ENCODE measurements at regions of chr22 and their contacts with region 1.

Region 1: DNA sequence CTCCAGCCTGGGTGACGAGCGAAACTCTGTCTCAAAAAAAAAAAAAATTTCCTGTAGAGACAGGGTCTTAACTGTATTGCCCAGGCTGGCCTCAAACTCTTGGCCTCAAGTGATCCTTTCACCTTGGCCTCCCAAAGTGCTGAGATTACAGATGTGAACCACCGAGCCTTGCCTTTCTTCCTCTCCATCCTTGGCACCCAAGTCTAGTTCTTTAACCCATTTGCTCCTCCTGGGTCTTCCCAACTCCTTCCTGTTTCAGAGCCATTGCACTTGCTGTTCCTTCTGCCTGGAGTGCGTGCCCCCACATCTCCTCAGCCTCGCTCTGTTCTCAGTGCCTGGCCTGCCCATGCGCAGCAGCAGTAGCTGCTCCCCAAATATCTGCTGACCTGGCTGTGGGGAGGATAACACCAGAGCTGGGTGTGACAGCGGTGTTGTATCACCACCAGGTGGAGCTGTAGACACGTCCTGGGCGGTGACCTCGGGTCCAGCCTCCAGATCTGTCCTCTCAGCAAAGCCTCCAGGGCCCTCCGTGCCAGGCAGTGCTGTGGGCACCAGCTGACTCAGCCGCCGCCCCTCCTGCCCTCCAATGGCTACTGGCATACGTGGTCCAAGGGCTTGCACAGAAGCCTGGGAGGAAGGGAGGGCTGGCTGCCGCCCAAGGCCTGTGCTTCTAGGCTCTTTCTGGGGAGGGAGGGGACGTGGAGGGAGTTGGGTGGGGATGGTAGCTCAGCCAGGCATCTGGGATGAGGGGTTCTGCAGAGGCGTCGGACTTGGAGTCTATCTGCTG is 22.0 kb downstream of the TEF start:
- DNase-seq: peak; percentile 85 to 87 (median 86)
- ATAC-seq: peak; percentile 95
- H3K4me3 ChIP-seq: no peak overlapping the region
- H3K4me1 ChIP-seq: peaks cover 20% of the 10 kb centered on the region
- CTCF ChIP-seq: peak; percentile 88

Region 2: DNA sequence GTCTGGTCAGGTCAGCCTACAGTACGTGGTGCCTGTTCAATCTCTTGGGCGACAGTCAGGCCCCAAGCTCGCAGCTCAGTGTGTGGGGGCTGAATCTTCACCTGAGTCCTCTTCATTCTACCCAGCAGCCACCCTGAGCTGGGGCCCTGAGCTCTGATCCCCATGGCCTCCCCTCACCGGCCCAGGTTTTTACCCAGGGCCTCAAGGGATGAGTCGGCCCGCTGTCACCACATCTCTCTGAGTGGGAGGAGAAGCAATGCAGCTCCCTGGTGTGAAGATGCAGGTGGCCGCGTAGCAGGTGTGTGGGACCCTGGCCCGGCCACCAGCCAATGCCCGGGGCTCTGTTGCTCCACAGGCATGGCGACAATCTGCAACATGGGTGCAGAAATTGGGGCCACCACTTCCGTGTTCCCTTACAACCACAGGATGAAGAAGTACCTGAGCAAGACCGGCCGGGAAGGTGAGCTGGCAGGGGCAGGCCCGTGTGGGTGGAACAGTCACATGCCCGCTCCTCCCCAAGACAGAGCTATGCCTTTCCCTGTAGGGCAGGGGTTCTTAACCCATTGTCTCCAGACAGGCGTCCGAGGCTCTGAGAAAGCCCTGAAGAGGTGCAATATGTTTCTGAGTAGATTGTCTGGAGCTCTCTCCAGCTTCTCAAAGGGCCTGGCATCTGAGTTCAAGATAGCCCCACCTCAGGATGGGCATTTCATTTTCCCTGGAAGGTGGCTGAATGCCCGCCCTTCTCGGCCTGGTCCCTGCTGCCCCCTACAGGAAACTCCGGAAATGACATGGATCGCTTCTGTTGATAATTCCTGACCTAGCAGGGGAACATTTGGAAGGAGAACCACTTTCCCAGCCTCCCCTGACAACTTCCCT is 113.7 kb after region 1 on chr22:
- intact Hi-C with region 1: loop called (anchors 2 to 5 kb)
- DNase-seq: peak in 2 of 3 donors; percentile 74 to 87
- ATAC-seq: peak; percentile 83
- H3K4me3 ChIP-seq: no peak overlapping the region
- H3K4me1 ChIP-seq: no peaks in the 10 kb centered on the region
- CTCF ChIP-seq: peak; percentile 56

Region 3: DNA sequence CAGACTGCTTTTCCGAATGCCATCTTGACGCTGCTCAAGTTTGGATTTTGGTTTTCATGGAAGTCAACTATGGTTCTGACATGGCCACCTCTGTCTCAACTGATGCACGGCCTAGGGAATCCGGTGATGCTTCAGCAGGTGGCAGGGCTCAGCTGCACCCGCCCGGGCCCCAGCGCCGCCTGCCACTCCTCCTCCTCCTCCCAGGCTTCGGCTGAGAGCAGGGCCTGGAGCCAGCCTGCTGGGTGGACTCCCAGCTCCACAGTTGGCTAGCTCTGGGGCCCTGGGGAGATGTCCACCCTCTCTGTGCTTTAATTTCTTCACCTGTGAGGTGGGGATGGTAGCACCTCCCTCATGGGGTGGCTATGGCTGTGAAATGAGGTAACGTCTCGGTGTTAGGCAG is 1048.7 kb after region 1 on chr22:
- intact Hi-C with region 1: no loop called
- DNase-seq: peak in 1 of 3 donors; percentile 32
- ATAC-seq: no peak
- H3K4me3 ChIP-seq: no peak overlapping the region
- H3K4me1 ChIP-seq: no peaks in the 10 kb centered on the region
- CTCF ChIP-seq: no peak